HEK293 (cell line): ENCODE measurements at regions of chr12 and their contacts with region 1.

Region 1: DNA sequence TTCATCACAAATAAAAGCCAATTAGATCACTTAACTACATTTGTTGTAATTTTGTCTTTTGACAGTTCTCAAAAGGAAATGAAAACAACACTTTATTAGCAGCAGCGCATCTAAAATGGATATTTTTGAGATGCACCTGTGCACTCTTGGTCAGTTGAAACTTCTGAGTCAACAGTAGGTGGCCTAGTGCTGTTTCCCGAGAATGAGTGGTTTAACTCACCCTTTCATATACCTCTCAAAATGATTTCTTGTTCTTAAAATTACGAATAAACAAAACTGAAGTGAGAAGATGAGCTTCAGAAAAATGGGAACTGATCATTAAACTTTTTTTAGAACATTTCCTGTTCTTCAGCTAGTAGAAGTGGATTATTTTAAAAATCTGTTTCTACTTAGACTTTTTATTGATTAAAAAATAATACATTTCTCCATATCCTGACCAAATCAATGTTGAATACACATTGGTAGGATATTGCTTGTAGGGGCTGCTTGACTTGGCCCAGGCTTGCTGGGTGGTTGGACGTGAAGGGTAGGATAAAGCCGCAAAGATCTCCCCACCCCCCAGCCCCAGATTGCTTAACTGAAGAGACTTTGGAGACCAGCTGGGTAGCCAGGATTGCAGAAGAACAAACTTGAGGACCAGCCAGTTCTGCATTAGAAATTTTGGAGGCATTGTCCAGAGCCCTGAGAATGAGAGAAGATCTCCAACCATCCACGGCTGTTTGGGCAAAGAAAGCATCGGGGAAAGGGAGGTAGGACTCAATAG is 22.3 kb upstream of the STK38L start:
- H3K4me3 ChIP-seq: no peak overlapping the region
- H3K27ac ChIP-seq: no peak overlapping the region
- H3K4me1 ChIP-seq: no peaks in the 10 kb centered on the region
- CTCF ChIP-seq: no peak

Region 2: DNA sequence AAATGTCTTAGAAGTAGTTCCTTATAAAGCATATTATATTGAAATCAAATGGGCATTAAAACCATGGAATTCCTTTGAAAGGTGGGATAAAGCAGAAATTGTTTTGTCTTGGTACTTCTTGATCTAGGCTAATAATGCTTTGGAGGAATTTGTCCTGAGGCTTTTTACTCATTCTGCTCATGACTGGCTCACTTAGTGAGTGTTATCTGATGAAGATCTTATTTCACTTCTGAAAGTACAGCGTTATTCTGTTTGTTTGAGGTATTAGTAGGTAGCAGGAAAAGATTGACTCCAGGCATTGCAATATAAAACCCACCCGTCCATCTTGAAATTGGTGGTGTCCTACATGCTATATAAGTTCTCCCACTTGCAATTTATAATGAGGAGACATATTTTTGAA is 144.9 kb before region 1 on chr12:
- CTCF ChIA-PET with region 1: no interaction called
- POLR2A ChIA-PET with region 1: interaction called, 10 read pairs
- H3K4me3 ChIP-seq: no peak overlapping the region
- H3K27ac ChIP-seq: no peak overlapping the region
- H3K4me1 ChIP-seq: peaks cover 7% of the 10 kb centered on the region; the same call in 1 of the 2 replicates
- CTCF ChIP-seq: no peak

Region 3: GRCh38 chr12:27343255-27344000 is 121.6 kb after region 1 on chr12:
- CTCF ChIA-PET with region 1: no interaction called
- POLR2A ChIA-PET with region 1: no interaction called
- H3K4me3 ChIP-seq: no peak overlapping the region
- H3K27ac ChIP-seq: no peak overlapping the region
- H3K4me1 ChIP-seq: peaks cover 12% of the 10 kb centered on the region
- CTCF ChIP-seq: no peak